Activated CD8-positive, alpha-beta T cell treated with anti-CD3 and anti-CD28 coated beads for 36 hours (primary cell): ENCODE measurements at regions of chr11 and their contacts with region 1.

Region 1: DNA sequence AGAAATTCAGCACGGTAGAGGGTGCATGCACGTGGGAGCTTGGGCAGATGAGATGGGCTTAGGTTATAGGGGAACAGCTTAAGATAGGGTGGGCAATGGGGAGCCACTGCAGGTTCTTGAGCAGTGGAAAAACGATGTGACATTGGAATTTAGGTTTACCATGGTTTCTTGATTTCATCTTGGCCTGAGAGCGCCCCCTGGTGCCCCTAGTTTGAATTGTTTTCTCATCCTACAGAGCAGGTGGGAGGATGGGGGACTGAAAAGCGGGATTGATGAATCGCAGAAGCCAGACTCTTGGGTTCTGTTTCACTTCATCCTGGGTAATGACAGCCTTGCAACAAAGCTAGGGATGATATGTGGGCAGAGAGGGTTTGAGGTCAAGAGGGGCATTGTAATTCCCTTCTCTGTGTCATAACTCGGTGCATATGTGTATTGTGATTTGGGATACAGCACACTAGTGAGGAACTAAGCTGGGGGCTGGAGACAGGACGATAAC is 6.7 kb upstream of the MCAM start:
- DNase-seq: peak; percentile 94
- ATAC-seq: no peak
- H3K4me3 Mint-ChIP-seq: no peak overlapping the region
- H3K27ac Mint-ChIP-seq: no peak overlapping the region
- H3K4me1 Mint-ChIP-seq: peaks cover 18% of the 10 kb centered on the region
- H3K27me3 Mint-ChIP-seq: peaks cover 3% of the 10 kb centered on the region
- CTCF ChIP-seq: peak; percentile 90

Region 2: DNA sequence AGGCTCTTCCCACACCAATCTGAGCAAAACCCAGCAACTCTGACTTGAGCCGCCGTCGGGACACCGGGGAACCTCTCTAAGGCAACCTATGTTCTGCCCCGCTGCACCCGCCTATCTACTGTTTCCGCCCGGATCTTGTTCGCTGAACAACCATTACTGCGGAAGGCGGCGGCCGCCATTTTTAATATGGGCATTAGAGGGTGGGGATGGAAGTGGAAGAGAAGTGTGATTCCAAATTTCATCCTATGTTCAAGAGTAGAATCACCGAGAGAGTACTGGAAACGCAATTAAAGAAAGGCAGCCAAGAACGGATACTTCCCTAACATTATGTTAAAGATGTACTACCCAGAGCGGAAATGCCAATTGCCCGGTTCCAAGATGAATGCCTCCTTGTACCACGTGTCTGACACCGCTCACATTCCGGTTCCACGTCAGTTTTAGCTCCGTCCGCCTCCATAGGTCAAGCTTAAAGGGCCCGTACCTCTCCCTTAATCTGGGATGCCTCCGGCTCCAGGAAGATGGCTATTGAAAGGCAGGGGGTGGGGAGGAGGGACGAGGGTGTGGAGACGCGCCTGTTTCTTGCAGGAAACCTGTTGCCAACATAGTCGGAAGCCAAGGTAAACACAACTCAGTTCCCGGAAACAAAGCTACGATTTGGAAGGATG is 221.7 kb before region 1 on chr11 and contains the start of gene DPAGT1:
- CTCF ChIA-PET with region 1: interaction called, 12 read pairs
- POLR2A ChIA-PET with region 1: interaction called, 3 read pairs
- intact Hi-C with region 1: no loop called
- DNase-seq: peak; percentile 93
- ATAC-seq: peak; percentile 82
- H3K4me3 Mint-ChIP-seq: peak within 1 kb of the TSS; percentile 91
- H3K27ac Mint-ChIP-seq: peak within 1 kb of the TSS; percentile 97
- H3K4me1 Mint-ChIP-seq: peaks cover 33% of the 10 kb centered on the region
- H3K27me3 Mint-ChIP-seq: no peaks in the 10 kb centered on the region
- CTCF ChIP-seq: no peak
- total RNA-seq, gene DPAGT1: 51.1 to 52.2 TPM

Region 3: DNA sequence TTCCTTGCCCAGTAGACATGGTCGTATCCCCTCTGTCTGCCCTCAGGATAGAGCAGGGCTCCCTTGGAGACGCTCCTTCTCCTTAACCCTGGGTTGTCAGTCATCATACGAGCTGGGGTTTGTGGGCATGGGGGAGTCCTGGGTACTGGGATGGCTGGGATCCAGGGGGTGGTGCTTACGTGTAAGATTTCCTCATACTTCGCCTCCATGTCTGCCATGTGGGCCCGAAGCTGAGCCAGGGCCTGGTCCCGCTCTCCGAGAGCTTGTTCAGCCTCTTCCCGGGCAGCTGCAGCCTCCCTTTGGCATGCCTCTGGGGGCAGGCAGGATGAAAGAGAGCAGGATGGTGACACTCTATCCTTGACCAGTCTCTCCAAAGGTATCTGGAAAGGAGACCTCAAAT is 133.1 kb before region 1 on chr11:
- CTCF ChIA-PET with region 1: interaction called, 14 read pairs
- POLR2A ChIA-PET with region 1: no interaction called
- intact Hi-C with region 1: no loop called
- DNase-seq: no peak
- ATAC-seq: no peak
- H3K4me3 Mint-ChIP-seq: no peak overlapping the region
- H3K27ac Mint-ChIP-seq: no peak overlapping the region
- H3K4me1 Mint-ChIP-seq: no peaks in the 10 kb centered on the region
- H3K27me3 Mint-ChIP-seq: no peaks in the 10 kb centered on the region
- CTCF ChIP-seq: no peak

Region 4: GRCh38 chr11:119218141-119218878 is 105.3 kb before region 1 on chr11:
- CTCF ChIA-PET with region 1: no interaction called
- POLR2A ChIA-PET with region 1: no interaction called
- intact Hi-C with region 1: no loop called
- DNase-seq: peak; percentile 47
- ATAC-seq: peak; percentile 99
- H3K4me3 Mint-ChIP-seq: no peak overlapping the region
- H3K27ac Mint-ChIP-seq: peak overlapping the region; percentile 43
- H3K4me1 Mint-ChIP-seq: peaks cover 42% of the 10 kb centered on the region
- H3K27me3 Mint-ChIP-seq: no peaks in the 10 kb centered on the region
- CTCF ChIP-seq: no peak

Region 5: DNA sequence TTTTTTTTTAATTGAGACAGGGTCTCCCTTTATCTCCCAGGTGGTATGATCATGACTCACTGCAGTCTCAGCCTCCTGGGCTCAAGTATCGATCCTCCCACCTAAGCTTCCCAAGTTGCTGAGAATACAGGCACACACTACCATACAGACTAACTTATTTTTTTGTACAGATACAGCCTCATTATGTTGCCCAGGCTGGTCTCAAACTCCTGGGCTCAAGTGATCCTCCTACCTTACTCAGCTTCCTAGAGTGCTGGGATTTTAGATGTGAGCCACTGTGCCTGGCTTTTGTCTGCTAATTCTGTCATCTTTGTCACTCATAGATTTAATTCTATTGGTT is 73.9 kb before region 1 on chr11:
- CTCF ChIA-PET with region 1: interaction called, 10 read pairs
- POLR2A ChIA-PET with region 1: no interaction called
- intact Hi-C with region 1: no loop called
- DNase-seq: no peak
- ATAC-seq: peak; percentile 43
- H3K4me3 Mint-ChIP-seq: no peak overlapping the region
- H3K27ac Mint-ChIP-seq: peak overlapping the region; percentile 77
- H3K4me1 Mint-ChIP-seq: peaks cover 51% of the 10 kb centered on the region
- H3K27me3 Mint-ChIP-seq: no peaks in the 10 kb centered on the region
- CTCF ChIP-seq: no peak

Region 6: GRCh38 chr11:119284344-119285157 is 39.0 kb before region 1 on chr11:
- CTCF ChIA-PET with region 1: interaction called, 36 read pairs
- POLR2A ChIA-PET with region 1: no interaction called
- intact Hi-C with region 1: no loop called
- DNase-seq: no peak
- ATAC-seq: peak; percentile 93
- H3K4me3 Mint-ChIP-seq: no peak overlapping the region
- H3K27ac Mint-ChIP-seq: peak overlapping the region; percentile 5
- H3K4me1 Mint-ChIP-seq: peaks cover 19% of the 10 kb centered on the region
- H3K27me3 Mint-ChIP-seq: no peaks in the 10 kb centered on the region
- CTCF ChIP-seq: no peak

Region 7: GRCh38 chr11:119356349-119357031 is 32.9 kb after region 1 on chr11:
- CTCF ChIA-PET with region 1: interaction called, 10 read pairs
- POLR2A ChIA-PET with region 1: no interaction called
- intact Hi-C with region 1: no loop called
- DNase-seq: peak; percentile 80
- ATAC-seq: peak; percentile 90
- H3K4me3 Mint-ChIP-seq: peak overlapping the region; percentile 77
- H3K27ac Mint-ChIP-seq: peak overlapping the region; percentile 41
- H3K4me1 Mint-ChIP-seq: peaks cover 8% of the 10 kb centered on the region
- H3K27me3 Mint-ChIP-seq: peaks cover 21% of the 10 kb centered on the region
- CTCF ChIP-seq: peak; percentile 100

Region 8: GRCh38 chr11:119445850-119446249 is 122.3 kb after region 1 on chr11:
- CTCF ChIA-PET with region 1: no interaction called
- POLR2A ChIA-PET with region 1: no interaction called
- intact Hi-C with region 1: no loop called
- DNase-seq: no peak
- ATAC-seq: no peak
- H3K4me3 Mint-ChIP-seq: no peak overlapping the region
- H3K27ac Mint-ChIP-seq: no peak overlapping the region
- H3K4me1 Mint-ChIP-seq: peaks cover 5% of the 10 kb centered on the region
- H3K27me3 Mint-ChIP-seq: peaks cover 13% of the 10 kb centered on the region
- CTCF ChIP-seq: no peak

Region 9: DNA sequence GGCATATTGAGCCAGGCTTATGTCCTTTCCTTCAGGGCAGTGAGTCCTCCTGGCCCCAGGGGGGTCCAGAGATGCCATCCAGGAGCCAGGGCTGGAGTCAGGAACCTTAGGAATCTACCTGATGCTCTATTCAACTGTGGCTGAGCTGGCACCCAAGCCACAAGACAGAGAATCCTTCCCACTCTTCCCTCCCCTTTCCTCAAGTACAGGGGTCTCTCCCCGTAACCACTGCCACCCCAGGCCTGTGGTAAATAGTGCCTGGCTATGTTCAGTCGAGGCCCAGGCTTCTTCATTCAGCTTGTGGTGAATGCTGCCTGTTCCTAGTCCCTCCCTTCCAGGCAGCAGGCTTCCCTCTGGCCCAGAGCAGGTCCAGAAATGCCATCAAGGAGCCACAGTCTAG is 144.9 kb after region 1 on chr11:
- CTCF ChIA-PET with region 1: no interaction called
- POLR2A ChIA-PET with region 1: no interaction called
- intact Hi-C with region 1: no loop called
- DNase-seq: no peak
- ATAC-seq: no peak
- H3K4me3 Mint-ChIP-seq: no peak overlapping the region
- H3K27ac Mint-ChIP-seq: no peak overlapping the region
- H3K4me1 Mint-ChIP-seq: no peaks in the 10 kb centered on the region
- H3K27me3 Mint-ChIP-seq: peaks cover 31% of the 10 kb centered on the region
- CTCF ChIP-seq: no peak

Region 10: DNA sequence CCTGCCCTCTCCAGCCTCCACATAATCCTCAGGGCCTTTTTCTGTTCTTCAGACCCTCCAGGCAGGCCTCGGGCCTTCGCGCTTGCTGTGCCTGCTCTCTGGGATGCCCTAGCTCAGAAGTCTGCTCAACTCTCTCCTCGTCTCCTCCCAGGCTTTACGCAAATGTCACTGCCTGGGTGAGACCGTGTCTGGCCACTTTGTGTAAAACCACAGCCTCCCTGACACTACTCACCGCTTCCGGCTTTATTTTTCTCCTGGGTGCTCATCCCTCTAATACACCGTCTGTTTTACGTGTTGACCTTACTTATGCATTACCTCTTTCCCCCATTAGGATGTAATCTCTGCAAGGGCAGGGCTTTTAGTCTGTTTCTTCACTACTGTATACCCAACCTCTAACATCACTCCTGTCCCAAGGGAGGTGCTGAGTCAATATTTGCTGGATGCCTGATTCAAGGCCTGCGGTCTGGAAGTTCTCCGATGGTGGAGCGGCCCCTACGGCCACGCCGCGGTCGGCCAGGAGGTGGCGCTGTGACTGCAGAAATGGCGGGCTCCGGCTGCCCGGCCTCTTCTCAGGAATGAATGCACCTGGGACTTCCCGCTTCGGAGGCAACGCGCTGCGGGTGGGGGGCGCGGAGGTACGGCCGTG is 157.6 kb after region 1 on chr11:
- CTCF ChIA-PET with region 1: no interaction called
- POLR2A ChIA-PET with region 1: no interaction called
- intact Hi-C with region 1: no loop called
- DNase-seq: peak; percentile 80
- ATAC-seq: peak; percentile 87
- H3K4me3 Mint-ChIP-seq: no peak overlapping the region
- H3K27ac Mint-ChIP-seq: no peak overlapping the region
- H3K4me1 Mint-ChIP-seq: no peaks in the 10 kb centered on the region
- H3K27me3 Mint-ChIP-seq: peaks cover 6% of the 10 kb centered on the region
- CTCF ChIP-seq: peak; percentile 99